ENCODE measurements at regions of chr20 and their contacts with region 1.

Region 1: DNA sequence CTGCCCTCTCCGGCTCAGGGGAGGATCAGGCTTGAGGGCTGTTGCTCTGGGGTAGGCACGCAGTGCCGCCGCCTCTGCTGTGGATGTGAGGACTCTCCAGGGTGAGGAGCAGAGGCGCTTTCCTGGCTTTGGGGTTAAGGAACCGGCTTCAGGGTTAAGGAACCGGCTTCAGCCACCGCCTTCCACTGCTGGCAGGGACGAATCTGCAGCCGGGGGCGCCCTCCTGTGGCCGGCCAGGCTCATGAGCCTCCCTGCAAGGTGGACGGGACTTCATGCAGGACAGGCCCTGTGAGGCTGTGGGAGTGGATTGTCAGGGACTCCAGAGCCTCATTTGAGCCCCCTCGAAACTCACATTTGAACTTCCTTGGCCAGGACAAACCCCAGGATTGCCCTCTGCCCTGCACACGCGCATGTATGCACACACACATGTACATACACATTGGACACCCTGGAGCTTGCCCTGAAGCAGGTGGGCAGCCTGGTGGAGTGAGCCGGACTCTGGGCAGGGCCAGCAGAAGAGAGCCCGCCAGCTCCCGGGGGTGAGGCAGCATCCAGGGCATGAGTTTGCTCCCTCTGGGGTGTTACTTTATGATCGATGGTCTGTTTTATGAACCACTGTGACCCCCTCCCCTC is 146.8 kb downstream of the PHACTR3 start:
- DNase-seq: peak; percentile 93
- H3K4me3 Mint-ChIP-seq: no peak overlapping the region
- H3K27ac Mint-ChIP-seq: no peak overlapping the region
- H3K4me1 Mint-ChIP-seq: no peaks in the 10 kb centered on the region
- H3K27me3 Mint-ChIP-seq: peaks cover 100% of the 10 kb centered on the region
- CTCF ChIP-seq: peak; percentile 94

Region 2: GRCh38 chr20:59571551-59572314 is 179.4 kb before region 1 on chr20:
- CTCF ChIA-PET with region 1: interaction called, 4 read pairs
- intact Hi-C with region 1: loop called (anchors 1 kb)
- DNase-seq: peak; percentile 80
- H3K4me3 Mint-ChIP-seq: no peak overlapping the region
- H3K27ac Mint-ChIP-seq: no peak overlapping the region
- H3K4me1 Mint-ChIP-seq: no peaks in the 10 kb centered on the region
- H3K27me3 Mint-ChIP-seq: peaks cover 79% of the 10 kb centered on the region
- CTCF ChIP-seq: peak; percentile 99

Region 3: DNA sequence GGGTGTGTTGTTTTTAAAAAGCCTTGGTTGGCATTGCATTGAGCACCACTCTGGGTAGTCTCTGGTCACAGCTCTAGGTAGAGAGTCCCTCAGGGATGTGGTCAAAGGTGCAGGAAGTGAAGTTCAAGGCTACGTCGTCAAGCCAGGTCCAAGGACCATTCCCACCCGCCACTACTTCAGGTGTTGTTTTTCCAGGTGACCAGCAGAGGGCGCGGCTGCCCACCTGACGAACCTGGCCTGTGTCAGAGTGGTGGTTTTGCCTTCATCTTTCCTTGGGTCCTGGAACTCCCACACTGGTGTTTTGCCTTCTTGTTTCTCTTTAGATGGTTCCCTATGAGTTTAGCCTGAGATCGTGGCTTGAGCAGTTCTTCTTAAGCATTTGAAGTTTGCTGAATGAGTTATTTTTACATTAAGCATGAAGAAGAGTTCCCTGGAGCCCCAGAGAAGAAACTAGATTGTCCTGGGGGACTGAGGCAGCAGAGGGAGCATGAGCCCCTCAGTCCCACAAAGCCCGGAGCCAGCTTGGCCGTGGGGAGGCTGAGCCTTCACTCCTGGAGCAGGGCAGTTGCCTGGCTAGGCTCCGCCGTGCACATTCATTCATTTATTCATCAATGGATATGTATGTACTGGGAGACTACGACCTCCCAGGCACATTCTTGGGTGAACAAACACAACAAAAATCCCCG is 152.4 kb before region 1 on chr20:
- CTCF ChIA-PET with region 1: interaction called, 10 read pairs
- intact Hi-C with region 1: loop called (anchors 1 kb)
- DNase-seq: peak; percentile 77
- H3K4me3 Mint-ChIP-seq: no peak overlapping the region
- H3K27ac Mint-ChIP-seq: no peak overlapping the region
- H3K4me1 Mint-ChIP-seq: no peaks in the 10 kb centered on the region
- H3K27me3 Mint-ChIP-seq: no peaks in the 10 kb centered on the region
- CTCF ChIP-seq: peak; percentile 98